Naive thymus-derived CD4-positive, alpha-beta T cell (primary cell): ENCODE measurements at regions of chr15 and their contacts with region 1.

Region 1: DNA sequence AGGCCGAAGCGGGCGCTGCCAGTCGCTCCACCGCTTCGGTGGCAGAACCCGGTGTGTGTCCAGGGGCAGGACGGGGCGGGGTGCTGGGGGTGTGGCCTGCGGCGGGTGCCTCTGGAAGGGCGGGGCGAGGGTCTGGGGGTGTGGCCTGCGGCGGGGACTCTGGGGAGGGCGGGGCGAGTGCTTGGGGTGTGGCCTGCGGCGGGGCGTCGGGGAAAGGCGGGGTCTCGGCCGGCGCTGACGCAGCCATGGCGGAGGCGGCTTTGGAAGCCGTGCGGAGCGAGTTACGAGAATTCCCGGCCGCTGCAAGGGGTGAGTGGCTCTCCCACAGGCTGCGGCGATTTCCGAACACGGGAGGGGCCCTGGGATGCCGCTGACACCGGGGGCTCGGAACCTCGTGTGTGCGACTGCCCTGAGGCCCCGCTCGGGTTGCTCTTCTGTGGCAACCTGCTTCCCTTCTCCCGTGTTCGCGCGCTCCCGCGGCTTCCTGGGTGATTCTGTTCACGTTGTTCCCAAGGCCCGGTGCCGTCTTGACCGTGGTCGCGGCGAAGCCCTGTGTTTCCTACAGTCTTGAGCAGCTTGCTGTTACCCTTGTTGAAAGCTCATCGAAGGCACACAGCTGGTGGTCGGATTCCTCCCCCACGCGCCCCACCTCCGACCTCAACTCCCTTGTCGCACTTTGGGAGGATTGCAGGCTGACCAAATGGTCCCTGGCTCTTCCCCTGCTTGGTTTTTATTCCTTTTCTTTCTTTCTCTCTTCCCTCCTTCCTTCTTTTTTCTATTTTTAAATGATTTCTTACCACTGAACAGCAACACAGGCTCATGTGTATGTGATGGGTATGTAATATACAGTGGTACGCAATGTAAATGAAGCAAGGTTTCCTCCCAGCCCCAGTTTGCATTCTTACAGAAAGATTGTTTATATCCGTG is at the start of gene JMJD7:
- DNase-seq: peak; percentile 81 to 98 (median 91)
- ATAC-seq: peak; percentile 99
- H3K4me3 ChIP-seq: peak within 1 kb of the TSS; percentile 99
- H3K4me3 Mint-ChIP-seq: peak within 1 kb of the TSS; percentile 86 to 99 (median 96)
- H3K27ac ChIP-seq: peak within 1 kb of the TSS; percentile 94
- H3K27ac Mint-ChIP-seq: peak within 1 kb of the TSS; percentile 78 to 96 (median 92)
- H3K4me1 ChIP-seq: peaks cover 26 to 38% of the 10 kb centered on the region in 2 donors
- H3K4me1 Mint-ChIP-seq: peaks cover 34 to 53% (median 50%) of the 10 kb centered on the region in 7 donors
- H3K27me3 ChIP-seq: no peaks in the 10 kb centered on the region
- H3K27me3 Mint-ChIP-seq: peaks cover 0 to 3% (median 0%) of the 10 kb centered on the region in 5 donors
- total RNA-seq, gene JMJD7: 25.3 to 83.7 (median 52.1) TPM

Region 2: GRCh38 chr15:41653760-41654159 is 174.4 kb before region 1 on chr15:
- CTCF ChIA-PET with region 1: no interaction called
- POLR2A ChIA-PET with region 1: no interaction called
- intact Hi-C with region 1: no loop called
- DNase-seq: no peak
- ATAC-seq: no peak
- H3K4me3 ChIP-seq: no peak overlapping the region
- H3K4me3 Mint-ChIP-seq: no peak overlapping the region
- H3K27ac ChIP-seq: no peak overlapping the region
- H3K27ac Mint-ChIP-seq: no peak overlapping the region
- H3K4me1 ChIP-seq: no peaks in the 10 kb centered on the region
- H3K4me1 Mint-ChIP-seq: peaks cover 0 to 7% (median 5%) of the 10 kb centered on the region in 7 donors
- H3K27me3 ChIP-seq: no peaks in the 10 kb centered on the region
- H3K27me3 Mint-ChIP-seq: peaks cover 0 to 47% (median 0%) of the 10 kb centered on the region in 5 donors

Region 3: DNA sequence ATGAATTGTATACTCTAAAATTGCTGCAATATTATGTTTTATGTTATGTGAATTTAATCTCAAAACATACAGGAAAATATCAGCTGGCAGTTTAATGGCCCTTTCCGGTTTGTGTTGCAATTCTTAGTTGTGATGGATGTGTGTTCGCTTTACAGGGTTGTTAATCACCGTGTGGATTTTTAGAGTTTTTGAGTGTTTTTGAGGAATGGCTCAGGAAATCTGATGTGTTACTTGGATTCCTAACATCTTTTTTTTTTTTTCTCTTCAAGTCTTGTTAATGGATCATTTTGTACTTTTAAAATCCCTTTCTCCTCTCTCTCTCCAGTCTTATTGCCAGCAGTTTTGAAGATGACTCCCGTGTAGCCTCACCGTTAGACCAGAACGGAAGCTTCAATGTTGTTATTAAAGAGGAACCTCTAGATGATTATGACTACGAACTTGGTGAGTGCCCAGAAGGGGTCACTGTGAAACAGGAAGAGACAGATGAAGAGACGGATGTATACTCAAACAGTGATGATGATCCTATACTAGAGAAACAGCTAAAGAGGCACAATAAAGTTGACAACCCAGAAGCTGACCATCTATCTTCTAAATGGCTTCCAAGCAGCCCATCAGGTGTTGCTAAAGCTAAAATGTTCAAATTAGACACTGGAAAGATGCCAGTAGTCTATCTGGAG is 132.3 kb before region 1 on chr15:
- CTCF ChIA-PET with region 1: no interaction called
- POLR2A ChIA-PET with region 1: no interaction called
- intact Hi-C with region 1: loop called in 1 of 2 experiments (anchors 5 kb)
- DNase-seq: peak in 7 of 9 donors; percentile 22 to 56 (median 44)
- ATAC-seq: peak; percentile 97
- H3K4me3 ChIP-seq: no peak overlapping the region
- H3K4me3 Mint-ChIP-seq: peak overlapping the region; percentile 3 to 69 (median 56)
- H3K27ac ChIP-seq: peak overlapping the region; percentile 42
- H3K27ac Mint-ChIP-seq: peak overlapping the region; percentile 22 to 81 (median 67)
- H3K4me1 ChIP-seq: peaks cover 0 to 10% of the 10 kb centered on the region in 2 donors
- H3K4me1 Mint-ChIP-seq: peaks cover 25 to 74% (median 59%) of the 10 kb centered on the region in 7 donors
- H3K27me3 ChIP-seq: no peaks in the 10 kb centered on the region
- H3K27me3 Mint-ChIP-seq: no peaks in the 10 kb centered on the region

Region 4: GRCh38 chr15:41894791-41895463 is 66.8 kb after region 1 on chr15:
- CTCF ChIA-PET with region 1: interaction called, 3 read pairs
- POLR2A ChIA-PET with region 1: interaction called, 3 read pairs
- intact Hi-C with region 1: loop called (anchors 1 to 2 kb)
- DNase-seq: peak; percentile 67 to 88 (median 80)
- ATAC-seq: peak; percentile 98
- H3K4me3 ChIP-seq: peak overlapping the region; percentile 27
- H3K4me3 Mint-ChIP-seq: peak overlapping the region; percentile 37 to 78 (median 70)
- H3K27ac ChIP-seq: peak overlapping the region; percentile 80
- H3K27ac Mint-ChIP-seq: peak overlapping the region; percentile 91 to 99 (median 97)
- H3K4me1 ChIP-seq: peaks cover 30 to 35% of the 10 kb centered on the region in 2 donors
- H3K4me1 Mint-ChIP-seq: peaks cover 14 to 46% (median 38%) of the 10 kb centered on the region in 7 donors
- H3K27me3 ChIP-seq: no peaks in the 10 kb centered on the region
- H3K27me3 Mint-ChIP-seq: no peaks in the 10 kb centered on the region

Region 5: DNA sequence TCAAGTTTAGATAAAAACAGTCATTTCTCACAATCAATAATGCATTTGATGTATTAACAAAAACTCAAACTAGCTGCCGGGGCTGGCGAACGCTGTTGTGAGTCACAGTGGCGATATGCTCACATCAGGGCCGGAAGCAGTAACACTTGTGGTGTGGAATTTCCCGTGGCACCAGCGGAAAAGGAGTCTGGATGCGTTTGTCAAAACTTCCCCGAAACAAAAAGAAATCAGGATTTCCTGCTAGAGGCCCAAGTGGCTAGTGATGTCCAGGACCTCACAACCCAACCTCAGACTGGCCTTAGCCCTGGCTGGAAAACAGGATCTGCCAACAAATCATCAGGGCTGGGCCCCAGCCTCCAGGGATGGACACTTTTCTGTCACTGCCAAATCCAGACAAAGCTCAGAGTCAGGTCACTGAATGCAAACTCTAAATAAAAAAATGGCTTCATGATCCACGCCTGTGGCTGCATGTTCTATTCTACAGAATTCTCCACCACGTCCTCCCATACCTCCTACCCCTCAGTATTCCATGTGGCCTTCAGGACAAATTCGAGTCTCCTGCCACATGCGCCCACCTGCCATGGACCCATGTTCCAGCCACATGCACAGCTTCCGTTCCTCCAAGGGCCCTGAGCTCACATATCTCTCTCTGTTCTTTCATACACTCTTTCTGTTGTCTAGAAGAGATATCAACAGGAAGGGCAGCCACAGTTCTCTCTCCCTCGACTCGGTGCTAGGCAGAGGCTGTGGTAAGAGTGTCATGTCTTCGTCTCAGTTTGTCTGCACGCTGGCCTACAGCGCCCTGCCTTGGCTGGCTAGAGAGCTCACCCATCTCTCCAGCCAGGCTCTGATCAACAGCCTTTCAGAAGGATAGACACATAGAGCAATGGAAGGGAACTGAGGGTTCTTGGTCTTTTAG is 108.8 kb after region 1 on chr15:
- CTCF ChIA-PET with region 1: interaction called, 5 read pairs
- POLR2A ChIA-PET with region 1: interaction called, 9 read pairs
- intact Hi-C with region 1: loop called in 1 of 2 experiments (anchors 1 kb)
- DNase-seq: peak; percentile 39 to 85 (median 79)
- ATAC-seq: peak; percentile 86
- H3K4me3 ChIP-seq: peak overlapping the region; percentile 36
- H3K4me3 Mint-ChIP-seq: peak overlapping the region; percentile 63 to 89 (median 82)
- H3K27ac ChIP-seq: peak overlapping the region; percentile 83
- H3K27ac Mint-ChIP-seq: peak overlapping the region; percentile 93 to 100 (median 98)
- H3K4me1 ChIP-seq: peaks cover 50 to 53% of the 10 kb centered on the region in 2 donors
- H3K4me1 Mint-ChIP-seq: peaks cover 41 to 72% (median 65%) of the 10 kb centered on the region in 7 donors
- H3K27me3 ChIP-seq: no peaks in the 10 kb centered on the region
- H3K27me3 Mint-ChIP-seq: no peaks in the 10 kb centered on the region

Region 6: GRCh38 chr15:42736793-42737528 is 908.8 kb after region 1 on chr15 and contains the start of gene CDAN1:
- CTCF ChIA-PET with region 1: no interaction called
- POLR2A ChIA-PET with region 1: no interaction called
- intact Hi-C with region 1: loop called in 1 of 2 experiments (anchors 2 kb)
- DNase-seq: peak; percentile 80 to 95 (median 87)
- ATAC-seq: peak; percentile 97
- H3K4me3 ChIP-seq: peak within 1 kb of the TSS; percentile 65
- H3K4me3 Mint-ChIP-seq: peak within 1 kb of the TSS; percentile 79 to 90 (median 86)
- H3K27ac ChIP-seq: peak within 1 kb of the TSS; percentile 87
- H3K27ac Mint-ChIP-seq: peak within 1 kb of the TSS; percentile 78 to 91 (median 86)
- H3K4me1 ChIP-seq: peaks cover 5 to 6% of the 10 kb centered on the region in 2 donors
- H3K4me1 Mint-ChIP-seq: peaks cover 13 to 26% (median 20%) of the 10 kb centered on the region in 7 donors
- H3K27me3 ChIP-seq: no peaks in the 10 kb centered on the region
- H3K27me3 Mint-ChIP-seq: no peaks in the 10 kb centered on the region
- total RNA-seq, gene CDAN1: 25.8 to 38.0 (median 28.3) TPM